ENCODE measurements at regions of chr22 and their contacts with region 1.

Region 1: DNA sequence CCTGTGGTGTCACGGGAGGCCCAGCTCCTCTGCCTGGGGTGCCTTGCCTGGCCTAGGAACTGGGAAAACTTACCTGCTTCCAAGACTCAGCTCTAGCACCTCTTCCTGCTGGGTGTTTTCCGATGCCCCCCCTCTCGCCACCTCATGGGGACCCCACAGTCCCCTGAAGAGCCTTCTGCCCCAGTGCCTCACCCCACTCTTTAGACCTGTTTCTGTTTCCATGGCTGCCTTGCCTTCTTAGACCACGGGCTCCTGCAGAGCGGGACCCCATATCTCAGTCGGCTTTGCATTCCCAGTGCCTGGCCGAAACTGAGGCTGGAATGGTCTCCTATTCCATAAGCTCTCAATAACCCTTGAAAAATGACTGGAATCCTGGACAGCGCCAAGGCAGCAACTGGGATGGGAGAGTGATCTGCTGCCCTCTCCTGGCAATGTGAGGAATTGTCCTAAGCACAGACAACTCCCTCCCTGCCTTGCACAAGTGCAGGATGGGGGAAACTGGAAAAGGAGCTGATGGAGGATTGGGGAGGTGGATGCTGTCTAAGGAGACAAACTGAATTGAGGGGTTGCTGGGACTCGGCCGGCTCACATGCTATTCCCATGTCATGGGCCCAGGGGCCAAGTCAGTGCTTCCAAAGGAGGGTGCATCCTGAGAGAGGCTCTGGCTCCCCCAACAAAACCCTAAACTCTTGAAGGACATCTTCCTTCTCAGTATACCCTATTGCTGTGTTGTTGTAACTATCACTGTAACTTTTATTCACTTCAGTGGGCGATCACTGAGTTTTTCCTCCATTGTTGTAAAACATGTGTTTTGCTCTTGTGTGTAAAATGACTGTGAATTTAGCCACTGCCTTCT is 26.6 kb upstream of the IL17RA start:
- DNase-seq: no peak
- H3K4me3 ChIP-seq: no peak overlapping the region
- H3K27ac ChIP-seq: no peak overlapping the region
- H3K4me1 ChIP-seq: peaks cover 0 to 3% (median 0%) of the 10 kb centered on the region in 3 donors
- H3K27me3 ChIP-seq: no peaks in the 10 kb centered on the region
- CTCF ChIP-seq: peak; percentile 54 to 92 (median 78)
- POLR2A ChIP-seq: no peak

Region 2: DNA sequence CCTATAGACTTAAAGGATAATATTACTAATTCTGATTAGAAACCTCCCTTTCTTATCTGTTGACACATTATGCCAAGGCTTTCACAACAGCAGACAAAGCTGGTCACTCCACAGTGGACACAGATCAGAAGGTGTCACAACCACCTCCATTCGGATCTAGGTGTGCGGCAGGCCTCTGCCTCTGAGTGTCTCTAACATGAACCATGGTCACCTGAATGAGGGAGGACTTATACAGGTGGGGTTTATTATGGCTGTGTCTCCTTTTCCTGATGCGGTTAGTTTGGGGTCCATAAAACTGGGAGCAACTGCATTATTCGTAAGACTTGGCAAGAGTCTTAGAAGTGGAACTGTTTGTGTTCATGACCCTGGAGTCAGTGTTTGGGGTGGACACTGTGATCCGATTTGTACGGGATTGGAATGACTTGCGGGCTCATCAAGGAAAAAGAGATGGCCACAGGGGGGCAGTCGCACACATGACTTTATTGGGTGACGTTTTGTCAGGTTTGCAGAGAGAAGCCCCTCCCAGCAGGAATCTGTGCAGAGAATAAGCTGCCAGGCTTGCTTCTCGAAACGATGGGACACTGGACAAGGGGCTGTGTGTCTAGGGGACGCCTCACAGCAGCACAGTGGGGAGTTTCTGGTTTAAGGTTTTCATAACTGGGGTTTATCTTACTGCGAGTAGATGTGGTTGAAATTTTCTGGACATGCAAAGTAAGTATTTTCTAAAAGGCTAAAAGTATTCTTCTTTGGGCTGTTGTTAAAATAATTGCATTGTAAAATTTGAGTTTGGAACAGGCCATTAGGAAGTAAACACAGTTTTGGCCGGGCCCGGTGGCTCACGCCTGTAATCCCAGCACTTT is 140.8 kb before region 1 on chr22:
- intact Hi-C with region 1: loop called (anchors 5 kb)
- DNase-seq: no peak
- H3K4me3 ChIP-seq: no peak overlapping the region
- H3K27ac ChIP-seq: no peak overlapping the region
- H3K4me1 ChIP-seq: no peaks in the 10 kb centered on the region
- H3K27me3 ChIP-seq: peaks cover 0 to 59% (median 0%) of the 10 kb centered on the region in 4 donors
- CTCF ChIP-seq: peak; percentile 19 to 53 (median 42)
- POLR2A ChIP-seq: no peak

Region 3: DNA sequence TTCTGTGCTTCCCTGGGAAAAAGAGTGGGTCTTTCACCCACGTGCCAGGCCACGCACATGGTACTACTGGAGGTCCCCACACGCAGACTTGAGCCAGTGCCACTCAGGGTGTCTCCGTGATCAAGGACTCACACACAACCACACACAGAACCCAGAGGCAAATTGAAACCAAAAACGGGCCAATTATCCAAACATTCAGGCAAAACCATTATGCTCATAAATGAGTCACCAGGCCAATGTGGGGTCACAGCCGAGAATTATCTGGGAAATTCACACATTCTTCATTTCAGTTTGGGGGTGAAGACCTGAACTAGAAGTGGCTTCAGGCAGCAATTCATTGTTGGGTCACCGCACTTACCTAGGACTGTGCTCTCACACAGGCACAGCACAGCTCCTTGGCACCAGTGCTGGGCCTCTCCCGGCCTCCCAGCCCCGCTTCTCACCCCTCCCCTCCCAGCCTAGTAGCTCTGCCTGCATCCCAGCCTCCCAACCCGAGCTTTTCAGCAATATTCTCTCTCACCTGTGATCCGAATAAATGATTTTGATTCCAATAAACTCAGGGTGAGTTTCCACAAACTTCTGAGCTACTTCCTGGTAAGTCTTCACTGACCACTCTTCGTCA is 133.1 kb after region 1 on chr22:
- intact Hi-C with region 1: no loop called
- DNase-seq: no peak
- H3K4me3 ChIP-seq: peak overlapping the region in 1 of 4 donors; percentile 16
- H3K27ac ChIP-seq: no peak overlapping the region
- H3K4me1 ChIP-seq: peaks cover 0 to 14% (median 0%) of the 10 kb centered on the region in 3 donors
- H3K27me3 ChIP-seq: no peaks in the 10 kb centered on the region
- CTCF ChIP-seq: no peak
- POLR2A ChIP-seq: no peak

Region 4: GRCh38 chr22:17552737-17553136 is 494.6 kb after region 1 on chr22:
- intact Hi-C with region 1: no loop called
- DNase-seq: no peak
- H3K4me3 ChIP-seq: no peak overlapping the region
- H3K27ac ChIP-seq: no peak overlapping the region
- H3K4me1 ChIP-seq: no peaks in the 10 kb centered on the region
- H3K27me3 ChIP-seq: no peaks in the 10 kb centered on the region
- CTCF ChIP-seq: no peak
- POLR2A ChIP-seq: no peak

Measured in esophagus squamous epithelium (tissue), 5 donors.